Activated CD4-positive, alpha-beta memory T cell treated with anti-CD3 and anti-CD28 coated beads for 36 hours (primary cell): ENCODE measurements at regions of chr6 and their contacts with region 1.

Region 1: DNA sequence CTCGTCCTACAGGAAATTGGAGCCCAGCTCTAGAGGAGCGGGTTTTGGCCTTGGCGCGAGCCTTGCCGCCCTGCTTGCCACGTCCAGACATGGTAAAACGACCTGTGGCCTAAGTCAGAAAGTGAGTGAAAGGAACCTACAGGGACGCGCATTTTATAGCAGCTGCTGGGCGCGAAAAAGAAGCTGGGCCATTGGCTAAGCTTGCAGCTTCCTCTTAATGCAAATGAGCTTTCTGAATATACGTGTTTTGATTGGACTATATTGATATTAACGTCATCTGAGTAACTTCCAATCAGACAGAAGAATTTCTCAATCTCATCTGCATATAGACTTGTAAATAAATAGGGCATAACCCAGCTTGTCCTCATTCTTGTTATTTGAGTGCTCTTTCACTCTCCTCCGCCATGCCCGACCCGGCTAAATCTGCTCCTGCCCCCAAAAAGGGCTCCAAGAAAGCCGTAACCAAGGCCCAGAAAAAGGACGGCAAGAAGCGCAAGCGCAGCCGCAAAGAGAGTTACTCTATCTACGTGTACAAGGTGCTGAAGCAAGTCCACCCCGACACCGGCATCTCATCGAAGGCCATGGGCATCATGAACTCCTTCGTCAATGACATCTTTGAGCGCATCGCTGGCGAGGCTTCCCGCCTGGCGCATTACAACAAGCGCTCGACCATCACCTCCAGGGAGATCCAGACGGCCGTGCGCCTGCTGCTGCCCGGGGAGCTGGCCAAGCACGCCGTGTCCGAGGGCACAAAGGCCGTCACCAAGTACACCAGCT is 18.9 kb downstream of the OR2B2 start:
- DNase-seq: peak; percentile 95
- H3K4me3 Mint-ChIP-seq: no peak overlapping the region
- H3K27ac Mint-ChIP-seq: no peak overlapping the region
- H3K4me1 Mint-ChIP-seq: peaks cover 32% of the 10 kb centered on the region
- H3K27me3 Mint-ChIP-seq: peaks cover 7% of the 10 kb centered on the region

Region 2: DNA sequence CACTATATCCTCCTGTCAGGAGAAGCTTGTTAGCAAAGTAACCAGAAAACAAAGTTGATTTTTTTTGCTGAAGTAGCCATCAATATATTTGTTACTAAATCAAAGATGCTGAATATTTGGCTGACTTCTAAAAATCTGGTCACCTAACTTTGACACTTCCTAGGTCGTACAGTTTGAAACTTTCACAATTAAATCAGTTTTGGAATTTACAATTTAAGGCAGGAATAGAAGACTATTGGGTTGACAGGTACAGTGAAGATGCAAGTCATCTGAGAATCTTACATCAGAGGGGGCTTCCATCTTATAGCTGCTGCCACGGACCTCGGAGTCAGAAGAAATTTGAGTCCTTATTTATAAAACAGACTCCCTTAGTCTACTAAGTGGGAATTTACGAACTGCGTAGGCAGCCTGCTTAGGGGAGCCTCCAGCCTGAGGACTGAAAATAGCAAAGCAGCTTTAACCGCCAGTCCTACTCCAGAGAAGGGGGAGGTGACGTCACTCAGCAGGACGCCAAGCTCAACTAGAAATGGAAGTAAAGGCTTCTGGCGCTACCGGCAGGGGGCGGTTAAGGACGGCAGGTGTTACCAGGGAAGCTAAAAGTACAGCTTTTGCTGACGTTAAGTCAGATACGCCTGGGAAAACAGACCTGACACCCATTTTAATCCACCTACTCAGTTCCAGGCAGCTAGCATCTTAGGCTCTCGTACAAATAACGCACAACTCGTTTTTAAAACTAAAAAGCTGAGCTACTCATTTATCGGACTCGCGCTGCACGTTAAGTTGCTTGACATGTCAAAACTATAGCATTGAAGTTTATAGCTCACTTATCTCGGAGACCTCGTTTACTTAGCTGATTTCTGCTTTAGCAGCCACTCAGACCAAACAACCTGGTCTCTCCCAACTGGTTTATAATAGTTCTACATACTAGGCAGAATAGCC is 1867.1 kb before region 1 on chr6:
- CTCF ChIA-PET with region 1: no interaction called
- POLR2A ChIA-PET with region 1: interaction called, 3 read pairs
- intact Hi-C with region 1: loop called (anchors 5 kb)
- DNase-seq: peak; percentile 96
- H3K4me3 Mint-ChIP-seq: peak overlapping the region; percentile 87
- H3K27ac Mint-ChIP-seq: peak overlapping the region; percentile 91
- H3K4me1 Mint-ChIP-seq: peaks cover 53% of the 10 kb centered on the region
- H3K27me3 Mint-ChIP-seq: peaks cover 5% of the 10 kb centered on the region

Region 3: GRCh38 chr6:27146706-27147505 is 746.3 kb before region 1 on chr6:
- CTCF ChIA-PET with region 1: interaction called, 4 read pairs
- POLR2A ChIA-PET with region 1: interaction called, 37 read pairs
- intact Hi-C with region 1: loop called (anchors 2 kb)
- DNase-seq: peak; percentile 89
- H3K4me3 Mint-ChIP-seq: no peak overlapping the region
- H3K27ac Mint-ChIP-seq: no peak overlapping the region
- H3K4me1 Mint-ChIP-seq: peaks cover 21% of the 10 kb centered on the region
- H3K27me3 Mint-ChIP-seq: no peaks in the 10 kb centered on the region

Region 4: DNA sequence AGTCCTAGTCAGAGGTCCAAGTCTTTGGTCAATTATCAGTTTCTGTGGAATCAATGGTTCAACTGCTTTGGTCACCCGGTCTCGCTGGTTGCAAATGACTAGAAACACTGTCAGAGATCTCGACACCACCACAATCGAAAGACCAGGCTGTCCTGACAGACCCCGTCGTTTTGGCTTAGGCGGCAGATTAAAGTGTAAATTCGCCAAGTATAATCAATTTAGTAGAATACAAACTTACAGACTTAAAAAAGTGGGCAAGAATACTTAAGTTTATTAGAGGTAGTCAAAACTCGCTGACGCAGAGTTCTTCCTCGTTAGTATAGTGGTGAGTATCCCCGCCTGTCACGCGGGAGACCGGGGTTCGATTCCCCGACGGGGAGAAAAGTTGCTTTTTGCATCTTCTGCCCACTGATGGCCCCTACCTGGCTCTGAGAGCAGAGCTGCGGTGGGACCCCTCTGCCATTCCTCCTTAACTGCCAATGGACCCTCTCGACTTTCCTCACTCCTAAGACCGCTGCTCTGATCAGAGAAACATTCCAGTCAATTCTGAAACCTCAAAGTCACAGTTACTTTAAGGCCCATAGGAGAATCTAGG is 389.7 kb before region 1 on chr6:
- CTCF ChIA-PET with region 1: no interaction called
- POLR2A ChIA-PET with region 1: no interaction called
- intact Hi-C with region 1: loop called (anchors 10 kb)
- DNase-seq: peak; percentile 86
- H3K4me3 Mint-ChIP-seq: peak overlapping the region; percentile 88
- H3K27ac Mint-ChIP-seq: peak overlapping the region; percentile 85
- H3K4me1 Mint-ChIP-seq: peaks cover 26% of the 10 kb centered on the region
- H3K27me3 Mint-ChIP-seq: peaks cover 10% of the 10 kb centered on the region

Region 5: DNA sequence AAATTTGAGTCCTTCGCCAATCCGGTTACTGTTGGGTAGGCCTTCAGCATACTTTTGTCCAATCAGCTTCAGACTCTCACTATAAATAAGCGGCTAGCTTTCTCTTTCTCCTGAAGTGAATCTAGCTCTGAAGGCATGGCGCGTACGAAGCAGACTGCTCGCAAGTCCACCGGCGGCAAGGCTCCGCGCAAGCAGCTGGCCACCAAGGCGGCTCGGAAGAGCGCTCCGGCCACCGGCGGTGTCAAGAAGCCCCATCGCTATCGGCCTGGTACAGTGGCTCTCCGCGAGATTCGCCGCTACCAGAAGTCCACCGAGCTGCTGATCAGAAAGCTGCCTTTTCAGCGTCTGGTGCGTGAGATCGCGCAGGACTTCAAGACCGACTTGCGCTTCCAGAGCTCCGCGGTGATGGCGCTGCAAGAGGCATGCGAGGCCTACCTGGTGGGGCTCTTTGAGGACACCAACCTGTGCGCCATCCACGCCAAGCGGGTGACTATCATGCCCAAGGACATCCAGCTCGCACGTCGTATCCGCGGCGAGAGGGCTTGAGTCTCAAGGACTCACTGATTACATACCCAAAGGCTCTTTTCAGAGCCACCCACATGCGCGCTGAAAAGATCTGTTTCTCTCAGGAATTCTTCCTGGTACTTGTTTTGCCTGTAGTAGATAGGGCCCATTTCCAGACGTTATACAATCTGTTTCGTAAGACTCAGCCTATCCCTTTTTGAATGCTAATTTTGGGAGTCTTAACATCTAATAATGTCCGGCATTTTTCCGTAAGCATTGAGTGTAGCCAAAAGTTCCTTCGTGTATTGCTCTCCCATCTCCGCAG is 83.1 kb before region 1 on chr6:
- CTCF ChIA-PET with region 1: interaction called, 71 read pairs
- POLR2A ChIA-PET with region 1: interaction called, 224 read pairs
- intact Hi-C with region 1: loop called (anchors 1 kb)
- DNase-seq: peak; percentile 82
- H3K4me3 Mint-ChIP-seq: peak overlapping the region; percentile 85
- H3K27ac Mint-ChIP-seq: peak overlapping the region; percentile 96
- H3K4me1 Mint-ChIP-seq: peaks cover 61% of the 10 kb centered on the region
- H3K27me3 Mint-ChIP-seq: peaks cover 4% of the 10 kb centered on the region

Region 6: DNA sequence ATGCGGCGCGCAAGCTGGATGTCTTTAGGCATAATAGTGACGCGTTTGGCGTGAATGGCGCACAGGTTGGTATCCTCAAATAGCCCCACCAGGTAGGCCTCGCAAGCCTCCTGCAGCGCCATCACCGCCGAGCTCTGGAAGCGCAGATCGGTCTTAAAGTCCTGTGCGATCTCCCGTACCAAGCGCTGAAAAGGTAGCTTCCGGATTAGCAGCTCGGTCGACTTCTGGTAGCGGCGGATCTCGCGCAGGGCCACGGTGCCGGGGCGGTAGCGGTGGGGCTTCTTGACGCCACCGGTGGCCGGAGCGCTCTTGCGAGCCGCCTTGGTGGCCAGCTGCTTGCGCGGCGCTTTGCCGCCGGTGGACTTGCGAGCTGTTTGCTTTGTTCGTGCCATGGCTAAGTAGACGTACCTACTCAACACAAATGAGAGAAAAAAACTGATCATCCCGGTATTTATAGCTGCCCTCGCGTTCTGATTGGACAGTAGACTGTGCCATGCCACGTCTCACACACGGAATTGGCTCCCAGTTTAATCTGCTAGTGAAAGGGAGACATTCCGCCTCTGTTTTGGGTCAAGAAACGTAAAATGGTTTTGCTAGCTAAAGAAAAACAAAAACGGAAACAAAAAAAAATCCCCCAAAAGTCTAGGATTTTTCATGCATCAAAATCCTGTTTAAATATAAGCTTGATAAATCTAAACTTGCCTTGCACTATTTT is 21.2 kb before region 1 on chr6:
- CTCF ChIA-PET with region 1: interaction called, 121 read pairs
- POLR2A ChIA-PET with region 1: interaction called, 507 read pairs
- intact Hi-C with region 1: loop called (anchors 1 kb)
- DNase-seq: peak; percentile 82
- H3K4me3 Mint-ChIP-seq: peak overlapping the region; percentile 81
- H3K27ac Mint-ChIP-seq: peak overlapping the region; percentile 99
- H3K4me1 Mint-ChIP-seq: peaks cover 30% of the 10 kb centered on the region
- H3K27me3 Mint-ChIP-seq: peaks cover 8% of the 10 kb centered on the region

Region 7: GRCh38 chr6:28940858-28941680 is 1047.8 kb after region 1 on chr6:
- CTCF ChIA-PET with region 1: no interaction called
- POLR2A ChIA-PET with region 1: no interaction called
- intact Hi-C with region 1: loop called (anchors 5 kb)
- DNase-seq: peak; percentile 82
- H3K4me3 Mint-ChIP-seq: peak overlapping the region; percentile 84
- H3K27ac Mint-ChIP-seq: peak overlapping the region; percentile 96
- H3K4me1 Mint-ChIP-seq: peaks cover 48% of the 10 kb centered on the region
- H3K27me3 Mint-ChIP-seq: no peaks in the 10 kb centered on the region